Heart left ventricle (tissue), 16 donors: ENCODE measurements at regions of chr15 and their contacts with region 1.

Region 1: GRCh38 chr15:74598126-74598842 is 17.4 kb upstream of the CLK3 start:
- DNase-seq: peak; percentile 96 to 97 (median 96)
- ATAC-seq: peak; percentile 97 to 99 (median 98)
- H3K4me3 ChIP-seq: peak overlapping the region; percentile 45 to 81 (median 68)
- H3K27ac ChIP-seq: peak overlapping the region; percentile 65 to 93 (median 90)
- H3K4me1 ChIP-seq: peaks cover 3 to 39% (median 20%) of the 10 kb centered on the region in 12 donors
- H3K27me3 ChIP-seq: no peaks in the 10 kb centered on the region
- CTCF ChIP-seq: no peak
- POLR2A ChIP-seq: peak; percentile 57 to 92

Region 2: GRCh38 chr15:74540761-74541493 is 57.4 kb before region 1 on chr15 and contains the start of gene ARID3B:
- intact Hi-C with region 1: loop called in 3 of 10 experiments (anchors 1 to 5 kb)
- DNase-seq: peak; percentile 98 to 99 (median 98)
- ATAC-seq: peak; percentile 99 to 100 (median 100)
- H3K4me3 ChIP-seq: peak within 1 kb of the TSS; percentile 79 to 99 (median 92)
- H3K27ac ChIP-seq: peak within 1 kb of the TSS in 11 of 12 donors; percentile 62 to 88 (median 79)
- H3K4me1 ChIP-seq: peaks cover 0 to 43% (median 20%) of the 10 kb centered on the region in 12 donors
- H3K27me3 ChIP-seq: no peaks in the 10 kb centered on the region
- CTCF ChIP-seq: no peak
- POLR2A ChIP-seq: peak in 1 of 2 donors; percentile 46
- total RNA-seq, gene ARID3B: 1.3 to 4.3 (median 2.6) TPM

Region 3: GRCh38 chr15:74545880-74546656 is 52.2 kb before region 1 on chr15:
- intact Hi-C with region 1: loop called in 3 of 10 experiments (anchors 1 to 5 kb)
- DNase-seq: peak; percentile 98 to 99 (median 99)
- ATAC-seq: peak; percentile 94 to 97 (median 95)
- H3K4me3 ChIP-seq: peak overlapping the region in 4 of 12 donors; percentile 8 to 29 (median 20)
- H3K27ac ChIP-seq: peak overlapping the region in 4 of 12 donors; percentile 4 to 35 (median 10)
- H3K4me1 ChIP-seq: peaks cover 0 to 59% (median 26%) of the 10 kb centered on the region in 12 donors
- H3K27me3 ChIP-seq: no peaks in the 10 kb centered on the region
- CTCF ChIP-seq: no peak
- POLR2A ChIP-seq: no peak

Region 4: DNA sequence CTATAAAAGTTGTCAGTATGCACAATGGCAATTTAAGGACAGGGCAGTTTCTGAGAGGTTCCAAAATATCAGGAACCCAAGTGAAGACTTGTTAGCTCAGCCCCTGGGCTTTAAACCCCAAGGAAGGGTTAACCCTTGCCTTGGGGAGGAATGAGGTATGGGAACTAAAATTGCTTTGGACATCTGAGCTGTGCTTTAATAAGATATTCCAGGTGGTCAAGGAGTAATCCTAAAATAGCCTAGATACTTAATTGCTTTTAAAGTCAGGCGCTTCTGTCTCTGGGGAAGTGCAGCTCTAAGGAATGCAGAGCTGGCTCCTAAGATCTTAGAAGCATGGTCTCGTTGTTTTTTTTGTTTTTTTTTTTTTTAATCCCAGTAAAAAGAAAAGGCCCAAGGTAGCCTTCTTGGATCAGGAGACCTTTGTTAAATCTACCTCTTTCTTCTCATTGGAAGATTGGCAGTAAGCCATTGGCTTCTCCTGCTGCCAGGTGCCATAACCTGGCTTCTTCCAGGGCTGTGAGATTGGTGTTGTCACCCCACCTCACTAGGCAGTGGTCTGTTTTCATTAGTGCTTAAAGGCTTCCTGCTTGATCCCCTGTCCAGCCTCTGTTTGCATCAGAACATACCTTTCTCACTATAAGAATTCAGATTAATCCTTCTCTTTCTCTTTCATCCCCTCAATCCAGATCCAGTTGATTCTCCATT is 32.8 kb before region 1 on chr15:
- intact Hi-C with region 1: no loop called
- DNase-seq: no peak
- ATAC-seq: no peak
- H3K4me3 ChIP-seq: no peak overlapping the region
- H3K27ac ChIP-seq: no peak overlapping the region
- H3K4me1 ChIP-seq: peaks cover 0 to 14% (median 6%) of the 10 kb centered on the region in 12 donors
- H3K27me3 ChIP-seq: no peaks in the 10 kb centered on the region
- CTCF ChIP-seq: no peak
- POLR2A ChIP-seq: no peak